ENCODE measurements at regions of chr6 and their contacts with region 1.

Region 1: DNA sequence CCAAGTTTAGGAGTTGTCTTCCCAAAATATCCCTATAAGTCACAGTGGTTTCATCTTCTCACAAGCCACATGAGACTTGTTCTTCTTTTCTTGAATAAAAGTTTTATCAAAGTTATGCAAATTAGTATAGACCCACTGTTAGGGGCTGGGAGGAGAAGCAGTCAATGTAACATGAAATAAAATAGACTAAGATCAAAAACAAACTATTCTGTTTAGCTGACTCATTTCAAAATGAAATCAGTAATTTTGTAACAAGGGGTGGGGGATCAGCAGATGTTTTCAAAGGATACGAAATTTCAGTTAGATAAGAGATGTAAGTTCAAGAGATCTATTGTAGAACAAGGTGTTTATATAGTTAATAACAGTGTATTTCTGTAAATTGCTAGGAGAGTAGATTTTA is 339.6 kb upstream of the PRDM1 start:
- DNase-seq: no peak
- H3K4me3 Mint-ChIP-seq: no peak overlapping the region
- H3K27ac Mint-ChIP-seq: peak overlapping the region; percentile 47
- H3K4me1 Mint-ChIP-seq: peaks cover 59% of the 10 kb centered on the region
- H3K27me3 Mint-ChIP-seq: no peaks in the 10 kb centered on the region

Region 2: GRCh38 chr6:105757512-105758200 is 11.1 kb after region 1 on chr6:
- intact Hi-C with region 1: loop called (anchors 1 kb)
- DNase-seq: no peak
- H3K4me3 Mint-ChIP-seq: no peak overlapping the region
- H3K27ac Mint-ChIP-seq: peak overlapping the region; percentile 41
- H3K4me1 Mint-ChIP-seq: peaks cover 50% of the 10 kb centered on the region
- H3K27me3 Mint-ChIP-seq: peaks cover 2% of the 10 kb centered on the region

Region 3: DNA sequence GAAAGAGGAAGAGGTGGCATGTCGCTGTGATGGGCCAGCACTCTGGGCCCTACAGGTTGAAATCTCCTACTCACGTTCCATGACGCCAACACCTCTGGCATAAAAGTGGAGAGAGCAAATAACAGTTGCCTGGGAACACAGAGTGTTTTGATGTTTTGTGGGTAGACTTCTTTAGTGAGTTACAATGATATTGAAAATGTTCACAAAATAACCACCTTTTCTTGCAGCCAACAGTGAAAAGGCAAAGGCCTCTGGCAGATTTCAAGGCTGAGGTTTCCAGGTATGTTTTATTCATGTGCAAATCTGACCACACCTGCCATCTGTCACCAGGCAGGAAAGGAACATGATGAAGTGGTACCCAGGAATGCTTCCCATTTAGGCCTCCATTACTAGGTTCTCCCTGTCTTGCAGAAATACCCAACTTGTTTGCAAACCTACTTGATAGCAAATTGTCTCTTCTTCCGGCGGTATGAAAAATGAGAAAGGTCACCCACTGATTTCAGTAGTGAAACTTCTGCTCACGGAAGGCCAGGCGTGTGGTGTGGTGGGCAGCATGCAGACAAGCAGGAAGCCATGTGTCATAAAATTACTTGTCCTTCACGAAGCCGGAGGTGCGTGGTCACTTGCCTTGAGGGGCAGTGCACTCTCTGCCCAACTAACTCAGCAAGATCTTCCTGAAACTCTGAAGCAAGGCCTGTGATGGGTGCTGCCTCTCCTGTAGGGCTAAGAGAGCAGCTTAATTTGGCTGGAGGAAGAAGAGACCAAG is 40.6 kb after region 1 on chr6:
- intact Hi-C with region 1: loop called (anchors 1 kb)
- DNase-seq: peak; percentile 36
- H3K4me3 Mint-ChIP-seq: no peak overlapping the region
- H3K27ac Mint-ChIP-seq: peak overlapping the region; percentile 44
- H3K4me1 Mint-ChIP-seq: peaks cover 75% of the 10 kb centered on the region
- H3K27me3 Mint-ChIP-seq: no peaks in the 10 kb centered on the region

Region 4: GRCh38 chr6:105872246-105872645 is 125.7 kb after region 1 on chr6:
- intact Hi-C with region 1: loop called (anchors 2 kb)
- DNase-seq: no peak
- H3K4me3 Mint-ChIP-seq: no peak overlapping the region
- H3K27ac Mint-ChIP-seq: no peak overlapping the region
- H3K4me1 Mint-ChIP-seq: peaks cover 27% of the 10 kb centered on the region
- H3K27me3 Mint-ChIP-seq: peaks cover 11% of the 10 kb centered on the region

Region 5: GRCh38 chr6:105886066-105886813 is 139.7 kb after region 1 on chr6:
- intact Hi-C with region 1: no loop called
- DNase-seq: no peak
- H3K4me3 Mint-ChIP-seq: no peak overlapping the region
- H3K27ac Mint-ChIP-seq: no peak overlapping the region
- H3K4me1 Mint-ChIP-seq: peaks cover 50% of the 10 kb centered on the region
- H3K27me3 Mint-ChIP-seq: no peaks in the 10 kb centered on the region